Endothelial cell of umbilical vein (primary cell): ENCODE measurements at regions of chr2 and their contacts with region 1.

Region 1: DNA sequence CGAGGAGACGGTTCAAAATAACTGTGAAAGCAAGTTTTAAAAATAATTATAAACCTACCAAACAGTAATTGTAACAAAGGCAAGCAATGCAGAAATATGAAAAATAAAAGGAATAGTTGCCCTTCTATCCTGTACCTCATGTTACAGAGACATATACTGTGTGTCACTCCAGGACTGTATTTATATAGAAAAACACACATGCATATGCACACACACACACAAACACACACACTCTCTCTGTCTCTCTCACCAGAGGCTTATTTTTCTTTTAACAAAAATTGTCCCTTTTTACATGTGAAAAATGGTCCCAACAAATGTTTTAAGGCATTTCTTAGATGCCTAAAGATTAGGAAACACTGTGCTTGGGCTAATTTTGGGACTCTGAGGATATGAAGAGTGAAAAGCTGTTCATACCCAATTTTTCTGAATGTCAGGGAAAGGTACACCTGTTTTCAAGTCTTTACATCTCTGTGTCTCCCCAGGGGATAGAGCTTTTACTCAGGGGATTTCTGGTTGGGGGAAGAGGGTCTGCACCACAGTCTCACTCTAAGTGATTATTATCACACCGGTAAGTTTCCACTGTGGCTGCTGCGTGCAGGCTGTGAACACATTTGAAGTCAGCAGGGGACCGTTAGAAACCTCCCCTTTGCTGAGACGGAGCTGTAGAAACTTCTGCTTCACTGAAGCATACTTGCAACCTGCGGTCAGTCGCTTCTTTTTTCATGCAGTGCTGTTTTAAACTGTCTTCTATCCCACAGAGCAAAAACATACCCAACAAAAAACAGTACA is 51.4 kb upstream of the SPAG16 start:
- DNase-seq: no peak
- H3K4me3 ChIP-seq: no peak overlapping the region
- H3K27ac ChIP-seq: no peak overlapping the region
- H3K4me1 ChIP-seq: no peaks in the 10 kb centered on the region
- H3K27me3 ChIP-seq: no peaks in the 10 kb centered on the region
- CTCF ChIP-seq: no peak
- POLR2A ChIP-seq: no peak

Region 2: GRCh38 chr2:212686285-212686895 is 546.5 kb before region 1 on chr2:
- CTCF ChIA-PET with region 1: no interaction called
- POLR2A ChIA-PET with region 1: no interaction called
- dilution Hi-C with region 1: no loop called
- intact Hi-C with region 1: loop called (anchors 5 kb)
- DNase-seq: peak; percentile 67
- H3K4me3 ChIP-seq: no peak overlapping the region
- H3K27ac ChIP-seq: no peak overlapping the region
- H3K4me1 ChIP-seq: peaks cover 3% of the 10 kb centered on the region
- H3K27me3 ChIP-seq: no peaks in the 10 kb centered on the region
- CTCF ChIP-seq: peak; percentile 60 to 68
- POLR2A ChIP-seq: no peak

Region 3: GRCh38 chr2:213104092-213104902 is 128.5 kb before region 1 on chr2:
- CTCF ChIA-PET with region 1: no interaction called
- POLR2A ChIA-PET with region 1: no interaction called
- dilution Hi-C with region 1: no loop called
- intact Hi-C with region 1: no loop called
- DNase-seq: no peak
- H3K4me3 ChIP-seq: no peak overlapping the region
- H3K27ac ChIP-seq: no peak overlapping the region
- H3K4me1 ChIP-seq: no peaks in the 10 kb centered on the region
- H3K27me3 ChIP-seq: no peaks in the 10 kb centered on the region
- CTCF ChIP-seq: no peak
- POLR2A ChIP-seq: no peak